ENCODE measurements at regions of chr2 and their contacts with region 1.

Region 1: GRCh38 chr2:206765242-206766056 is at the starts of genes FASTKD2 and MDH1B:
- DNase-seq: peak; percentile 80
- H3K4me3 Mint-ChIP-seq: peak within 1 kb of the TSS; percentile 97
- H3K27ac Mint-ChIP-seq: peak within 1 kb of the TSS; percentile 98
- H3K4me1 Mint-ChIP-seq: peaks cover 30% of the 10 kb centered on the region
- H3K27me3 Mint-ChIP-seq: peaks cover 4% of the 10 kb centered on the region
- total RNA-seq, gene FASTKD2: 32.8 and 36.7 TPM in 2 replicates
- total RNA-seq, gene MDH1B: 0.20 and 0.36 TPM in 2 replicates

Region 2: GRCh38 chr2:205352593-205352992 is 1412.9 kb before region 1 on chr2:
- intact Hi-C with region 1: no loop called
- DNase-seq: no peak
- H3K4me3 Mint-ChIP-seq: no peak overlapping the region
- H3K27ac Mint-ChIP-seq: no peak overlapping the region
- H3K4me1 Mint-ChIP-seq: no peaks in the 10 kb centered on the region
- H3K27me3 Mint-ChIP-seq: peaks cover 4% of the 10 kb centered on the region

Region 3: GRCh38 chr2:206159346-206160124 is 605.9 kb before region 1 on chr2 and contains the starts of genes EEF1B2 and NDUFS1:
- intact Hi-C with region 1: loop called (anchors 1 kb)
- DNase-seq: peak; percentile 97
- H3K4me3 Mint-ChIP-seq: peak within 1 kb of the TSS; percentile 99
- H3K27ac Mint-ChIP-seq: peak within 1 kb of the TSS; percentile 99
- H3K4me1 Mint-ChIP-seq: peaks cover 52% of the 10 kb centered on the region
- H3K27me3 Mint-ChIP-seq: no peaks in the 10 kb centered on the region
- total RNA-seq, gene EEF1B2: 698 and 711 TPM in 2 replicates
- total RNA-seq, gene NDUFS1: 76.6 and 78.0 TPM in 2 replicates

Region 4: DNA sequence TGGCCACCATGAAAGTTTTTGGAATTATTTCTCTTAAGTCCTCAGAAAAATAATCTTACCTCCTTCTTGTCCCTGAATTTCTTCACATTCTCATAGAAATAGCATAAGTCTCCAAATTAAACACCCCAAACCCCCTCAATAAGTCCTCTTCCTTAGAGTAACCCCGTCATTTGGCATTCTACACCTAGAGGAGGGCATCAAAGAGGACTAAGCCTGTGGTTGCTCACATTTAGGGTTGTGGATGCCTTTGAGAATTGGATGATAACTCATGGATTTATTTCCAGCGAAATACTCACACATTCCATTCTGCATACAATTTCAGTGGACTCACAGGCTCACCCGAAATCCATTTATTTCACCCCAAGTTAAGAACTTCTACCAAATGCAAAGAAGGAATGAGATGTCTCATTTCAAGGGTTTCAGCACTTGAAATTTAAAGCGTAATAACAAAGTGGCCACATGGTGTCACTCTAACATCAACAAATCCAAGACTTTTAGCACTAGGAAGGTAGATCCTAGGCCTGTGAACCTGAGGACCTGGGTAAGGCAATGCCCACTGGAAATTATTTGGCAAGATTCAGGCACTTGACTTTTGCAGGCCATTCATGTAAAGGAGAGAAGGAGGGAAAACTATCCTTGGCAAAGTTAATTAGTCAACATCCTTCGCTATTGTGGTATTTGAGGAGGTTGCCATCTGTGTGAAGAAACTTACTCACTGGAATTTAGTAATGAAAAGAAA is 71.9 kb before region 1 on chr2:
- intact Hi-C with region 1: loop called (anchors 5 kb)
- DNase-seq: peak; percentile 2
- H3K4me3 Mint-ChIP-seq: no peak overlapping the region
- H3K27ac Mint-ChIP-seq: no peak overlapping the region
- H3K4me1 Mint-ChIP-seq: no peaks in the 10 kb centered on the region
- H3K27me3 Mint-ChIP-seq: peaks cover 2% of the 10 kb centered on the region

Region 5: GRCh38 chr2:206790311-206790935 is 25.0 kb after region 1 on chr2:
- intact Hi-C with region 1: no loop called
- DNase-seq: no peak
- H3K4me3 Mint-ChIP-seq: no peak overlapping the region
- H3K27ac Mint-ChIP-seq: no peak overlapping the region
- H3K4me1 Mint-ChIP-seq: no peaks in the 10 kb centered on the region
- H3K27me3 Mint-ChIP-seq: no peaks in the 10 kb centered on the region

Region 6: GRCh38 chr2:206800506-206801417 is 35.3 kb after region 1 on chr2:
- intact Hi-C with region 1: loop called (anchors 1 kb)
- DNase-seq: peak; percentile 28
- H3K4me3 Mint-ChIP-seq: peak overlapping the region; percentile 49
- H3K27ac Mint-ChIP-seq: peak overlapping the region; percentile 61
- H3K4me1 Mint-ChIP-seq: peaks cover 20% of the 10 kb centered on the region
- H3K27me3 Mint-ChIP-seq: no peaks in the 10 kb centered on the region

Region 7: DNA sequence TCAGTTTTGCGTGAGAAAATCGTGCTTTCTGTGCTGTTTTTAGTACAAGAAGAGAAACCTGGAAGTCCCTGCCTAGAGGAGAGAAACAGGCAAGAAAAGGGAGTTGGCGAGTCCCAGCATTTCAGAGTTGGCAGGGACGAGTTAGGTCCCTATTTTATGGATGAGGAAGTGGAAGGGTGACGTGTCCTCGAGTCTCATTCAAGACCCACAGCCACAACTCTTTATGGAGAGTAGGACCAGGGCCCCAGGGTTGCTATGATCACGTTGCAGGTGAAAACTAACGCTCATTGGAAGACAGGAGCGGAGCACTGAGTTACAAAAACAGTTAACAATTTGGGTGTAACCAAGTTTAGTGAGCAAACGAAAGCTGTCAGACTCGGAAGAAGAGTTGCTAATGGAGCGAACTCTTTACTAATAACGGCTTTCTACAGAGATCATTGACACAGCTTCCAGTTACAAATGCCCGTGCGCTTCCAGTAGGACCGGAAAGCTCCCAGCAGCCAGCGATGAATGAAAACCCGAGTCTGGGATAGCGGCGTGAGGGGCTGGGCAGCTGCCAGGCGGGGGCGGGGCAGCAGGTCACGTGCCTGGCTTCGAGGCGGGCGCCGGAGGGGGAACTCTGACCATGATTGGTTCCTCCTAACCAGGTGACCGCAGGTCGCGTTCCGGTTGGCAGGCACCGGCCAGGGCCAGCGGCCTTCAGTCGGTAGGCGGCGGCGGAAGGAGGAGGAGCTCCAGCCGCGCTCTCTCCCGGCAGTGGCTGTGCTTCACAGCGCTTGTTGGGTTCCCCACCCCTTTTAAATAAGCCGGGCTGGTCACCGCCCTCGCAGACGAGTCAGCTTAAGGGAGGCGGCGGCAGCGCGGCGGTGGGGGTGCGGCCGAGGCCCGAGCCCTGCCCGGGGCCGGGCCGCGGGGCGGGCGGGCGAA is 945.6 kb after region 1 on chr2 and contains the start of gene CCNYL1:
- intact Hi-C with region 1: loop called (anchors 2 kb)
- DNase-seq: peak; percentile 98
- H3K4me3 Mint-ChIP-seq: peak within 1 kb of the TSS; percentile 96
- H3K27ac Mint-ChIP-seq: peak within 1 kb of the TSS; percentile 76
- H3K4me1 Mint-ChIP-seq: peaks cover 36% of the 10 kb centered on the region
- H3K27me3 Mint-ChIP-seq: no peaks in the 10 kb centered on the region
- total RNA-seq, gene CCNYL1: 6.8 and 8.7 TPM in 2 replicates

Region 8: GRCh38 chr2:208265801-208266552 is 1500.5 kb after region 1 on chr2 and contains the start of gene PIKFYVE:
- intact Hi-C with region 1: loop called (anchors 5 kb)
- DNase-seq: peak; percentile 88
- H3K4me3 Mint-ChIP-seq: peak within 1 kb of the TSS; percentile 89
- H3K27ac Mint-ChIP-seq: peak within 1 kb of the TSS; percentile 92
- H3K4me1 Mint-ChIP-seq: peaks cover 46% of the 10 kb centered on the region
- H3K27me3 Mint-ChIP-seq: no peaks in the 10 kb centered on the region
- total RNA-seq, gene PIKFYVE: 28.7 and 33.5 TPM in 2 replicates

Measured in activated T-helper 1 cell treated with anti-CD3 and anti-CD28 coated beads, Interleukin-12 subunit alpha, Interleukin-12 subunit beta, Interleukin-2, Interleukin-4 antibody, amounts not matched to agents 30 ng/mL and 10 ng/mL and 1 ng/mL, durations not matched to agents 14 hours and 24 hours and 36 hours (primary cell).